ENCODE measurements at regions of chr21 and their contacts with region 1.

Region 1: GRCh38 chr21:35051287-35051818 is 2.3 kb upstream of the RUNX1 start:
- DNase-seq: peak; percentile 83 to 86 (median 84)
- H3K4me3 ChIP-seq: peak overlapping the region in 1 of 2 donors; percentile 4
- H3K4me3 Mint-ChIP-seq: peak overlapping the region; percentile 51 to 100 (median 94)
- H3K27ac ChIP-seq: peak overlapping the region; percentile 82
- H3K27ac Mint-ChIP-seq: peak overlapping the region; percentile 92 to 100 (median 99)
- H3K4me1 ChIP-seq: peaks cover 33% of the 10 kb centered on the region
- H3K4me1 Mint-ChIP-seq: peaks cover 26 to 55% (median 35%) of the 10 kb centered on the region in 4 donors
- H3K27me3 ChIP-seq: no peaks in the 10 kb centered on the region
- H3K27me3 Mint-ChIP-seq: peaks cover 1 to 3% of the 10 kb centered on the region in 2 donors

Region 2: GRCh38 chr21:34133802-34134201 is 917.6 kb before region 1 on chr21:
- CTCF ChIA-PET with region 1: no interaction called
- POLR2A ChIA-PET with region 1: no interaction called
- intact Hi-C with region 1: no loop called
- DNase-seq: no peak
- H3K4me3 ChIP-seq: no peak overlapping the region
- H3K4me3 Mint-ChIP-seq: no peak overlapping the region
- H3K27ac ChIP-seq: no peak overlapping the region
- H3K27ac Mint-ChIP-seq: peak overlapping the region in 2 of 7 donors; percentile 27 to 39
- H3K4me1 ChIP-seq: peaks cover 48% of the 10 kb centered on the region
- H3K4me1 Mint-ChIP-seq: peaks cover 46 to 64% (median 57%) of the 10 kb centered on the region in 4 donors
- H3K27me3 ChIP-seq: no peaks in the 10 kb centered on the region
- H3K27me3 Mint-ChIP-seq: no peaks in the 10 kb centered on the region

Region 3: GRCh38 chr21:34807146-34807880 is 244.0 kb before region 1 on chr21:
- CTCF ChIA-PET with region 1: no interaction called
- POLR2A ChIA-PET with region 1: interaction called, 6 read pairs
- intact Hi-C with region 1: loop called (anchors 5 kb)
- DNase-seq: peak; percentile 20 to 90 (median 24)
- H3K4me3 ChIP-seq: no peak overlapping the region
- H3K4me3 Mint-ChIP-seq: peak overlapping the region in 4 of 8 donors; percentile 26 to 79 (median 69)
- H3K27ac ChIP-seq: peak overlapping the region; percentile 59
- H3K27ac Mint-ChIP-seq: peak overlapping the region; percentile 75 to 99 (median 91)
- H3K4me1 ChIP-seq: peaks cover 56% of the 10 kb centered on the region
- H3K4me1 Mint-ChIP-seq: peaks cover 61 to 89% (median 73%) of the 10 kb centered on the region in 4 donors
- H3K27me3 ChIP-seq: no peaks in the 10 kb centered on the region
- H3K27me3 Mint-ChIP-seq: no peaks in the 10 kb centered on the region

Region 4: DNA sequence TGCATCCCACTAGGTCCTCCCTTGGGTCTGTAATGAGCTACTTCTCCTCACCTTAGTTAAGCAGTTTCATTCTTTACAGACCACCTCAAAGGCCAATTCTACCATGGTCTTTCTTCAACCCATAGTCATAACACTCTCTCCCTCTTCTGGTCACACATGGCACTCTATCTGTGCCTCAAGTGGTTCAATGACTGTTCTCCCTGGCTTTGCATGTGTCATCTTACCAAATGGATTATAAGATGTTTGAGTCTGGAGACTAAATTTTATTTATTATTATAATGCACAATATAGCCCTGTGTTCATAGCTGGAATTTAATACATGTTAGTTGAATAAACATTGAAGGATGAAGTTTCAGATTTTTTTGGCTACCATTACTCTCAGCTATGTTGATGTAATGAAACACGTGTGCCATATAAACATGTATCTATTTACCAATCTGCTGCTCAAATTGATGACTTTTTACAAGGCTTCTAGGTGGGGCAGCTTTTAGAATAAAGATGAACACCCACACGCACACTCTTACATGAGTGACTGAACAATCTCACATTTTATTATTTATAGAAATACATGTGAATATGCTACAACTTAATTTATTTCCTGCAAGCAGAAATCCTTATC is 104.3 kb before region 1 on chr21:
- CTCF ChIA-PET with region 1: interaction called, 5 read pairs
- POLR2A ChIA-PET with region 1: interaction called, 14 read pairs
- intact Hi-C with region 1: no loop called
- DNase-seq: no peak
- H3K4me3 ChIP-seq: no peak overlapping the region
- H3K4me3 Mint-ChIP-seq: peak overlapping the region in 2 of 8 donors; percentile 17 to 56
- H3K27ac ChIP-seq: no peak overlapping the region
- H3K27ac Mint-ChIP-seq: peak overlapping the region in 6 of 7 donors; percentile 19 to 67 (median 58)
- H3K4me1 ChIP-seq: peaks cover 82% of the 10 kb centered on the region
- H3K4me1 Mint-ChIP-seq: peaks cover 66 to 97% (median 82%) of the 10 kb centered on the region in 4 donors
- H3K27me3 ChIP-seq: no peaks in the 10 kb centered on the region
- H3K27me3 Mint-ChIP-seq: no peaks in the 10 kb centered on the region

Region 5: GRCh38 chr21:35002879-35003722 is 48.3 kb before region 1 on chr21:
- CTCF ChIA-PET with region 1: interaction called, 3 read pairs
- POLR2A ChIA-PET with region 1: interaction called, 13 read pairs
- intact Hi-C with region 1: no loop called
- DNase-seq: no peak
- H3K4me3 ChIP-seq: no peak overlapping the region
- H3K4me3 Mint-ChIP-seq: peak overlapping the region in 2 of 8 donors; percentile 3 to 24
- H3K27ac ChIP-seq: no peak overlapping the region
- H3K27ac Mint-ChIP-seq: peak overlapping the region in 6 of 7 donors; percentile 3 to 72 (median 12)
- H3K4me1 ChIP-seq: peaks cover 81% of the 10 kb centered on the region
- H3K4me1 Mint-ChIP-seq: peaks cover 76 to 97% (median 87%) of the 10 kb centered on the region in 4 donors
- H3K27me3 ChIP-seq: no peaks in the 10 kb centered on the region
- H3K27me3 Mint-ChIP-seq: no peaks in the 10 kb centered on the region

Region 6: DNA sequence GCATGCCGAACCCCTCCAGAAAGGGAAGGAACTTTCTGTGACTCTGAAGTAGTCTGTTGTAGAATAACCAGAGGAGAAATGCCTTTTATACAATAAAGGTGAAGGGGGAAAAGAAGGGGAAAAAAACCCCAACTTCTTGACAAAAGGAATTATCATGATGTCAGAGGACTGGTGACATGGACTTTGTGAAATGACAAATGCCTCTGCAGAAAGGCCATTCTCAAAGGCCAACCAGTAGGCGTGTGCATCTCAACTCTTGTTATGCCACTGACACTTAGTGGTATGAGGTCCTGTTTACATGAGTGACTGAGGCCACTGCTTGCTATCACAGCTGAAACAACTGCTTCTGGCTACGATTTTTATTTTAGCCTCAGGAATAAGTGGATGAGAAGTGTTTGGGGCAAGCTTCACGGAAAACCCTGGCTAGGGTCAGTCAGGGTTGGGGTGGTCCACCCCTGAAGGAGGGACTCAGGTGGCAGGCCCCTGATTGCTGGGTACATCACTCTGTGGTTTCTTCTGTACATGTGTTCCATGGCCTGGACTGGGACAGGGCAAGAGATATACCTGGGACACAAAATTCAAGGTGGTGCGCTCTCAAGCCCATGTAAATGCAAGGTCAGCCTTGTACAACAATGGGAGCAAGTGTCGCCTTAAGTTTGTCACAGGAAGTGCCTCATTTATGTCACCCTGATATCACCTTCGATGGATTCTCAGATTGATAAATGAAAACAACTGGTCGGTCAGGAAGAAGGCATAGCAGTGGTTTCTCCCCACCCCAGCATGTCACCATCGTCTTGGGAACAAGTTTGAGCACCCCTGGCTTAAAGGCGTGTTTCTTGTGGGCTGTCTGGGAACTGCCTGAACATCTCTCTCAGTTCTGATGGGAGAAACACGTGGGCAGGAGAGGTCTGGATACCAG is 14.6 kb before region 1 on chr21:
- CTCF ChIA-PET with region 1: interaction called, 24 read pairs
- POLR2A ChIA-PET with region 1: interaction called, 729 read pairs
- intact Hi-C with region 1: no loop called
- DNase-seq: no peak
- H3K4me3 ChIP-seq: peak overlapping the region; percentile 8 to 18
- H3K4me3 Mint-ChIP-seq: peak overlapping the region in 7 of 8 donors; percentile 71 to 91 (median 81)
- H3K27ac ChIP-seq: peak overlapping the region; percentile 63
- H3K27ac Mint-ChIP-seq: peak overlapping the region; percentile 91 to 97 (median 95)
- H3K4me1 ChIP-seq: peaks cover 99% of the 10 kb centered on the region
- H3K4me1 Mint-ChIP-seq: peaks cover 85 to 100% (median 92%) of the 10 kb centered on the region in 4 donors
- H3K27me3 ChIP-seq: no peaks in the 10 kb centered on the region
- H3K27me3 Mint-ChIP-seq: no peaks in the 10 kb centered on the region

Region 7: DNA sequence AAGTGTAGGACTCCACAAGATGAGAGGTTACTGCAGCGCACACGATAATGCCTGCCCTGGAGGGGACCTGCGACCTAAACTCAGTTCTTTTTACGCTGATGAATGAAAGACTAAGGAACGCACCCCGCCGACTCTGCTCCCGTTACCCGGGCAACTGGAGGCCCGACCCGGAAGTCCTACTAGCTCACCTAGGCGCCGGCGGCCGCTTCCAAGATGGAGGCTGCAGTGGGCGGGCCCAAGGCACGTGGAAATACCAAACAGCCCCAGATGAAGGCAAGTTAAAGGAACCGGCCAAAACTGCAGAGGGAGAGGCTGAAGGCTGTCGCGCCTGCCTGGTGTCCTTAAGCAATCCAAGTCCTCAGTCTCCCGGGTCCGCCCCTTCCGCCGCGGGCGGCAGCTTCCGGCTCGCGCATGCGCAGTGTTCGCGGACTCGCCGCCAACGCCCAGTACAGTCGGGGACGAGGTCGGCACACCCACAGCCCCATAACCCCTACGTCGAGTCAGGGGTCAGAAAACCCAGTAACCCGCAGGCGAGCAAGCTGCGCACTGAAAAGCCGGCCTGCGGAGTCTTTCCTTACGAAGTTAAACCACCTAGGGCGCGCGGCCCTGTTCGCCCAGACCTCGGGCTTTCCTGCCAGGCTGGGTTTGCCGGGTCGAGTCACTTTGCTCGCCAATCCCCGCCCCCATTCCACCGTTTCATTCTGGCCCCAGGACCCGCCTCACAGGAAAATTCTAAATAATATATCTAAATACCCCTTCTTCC is 1009.0 kb after region 1 on chr21 and contains the start of gene SETD4:
- CTCF ChIA-PET with region 1: no interaction called
- POLR2A ChIA-PET with region 1: no interaction called
- intact Hi-C with region 1: loop called (anchors 1 kb)
- DNase-seq: peak; percentile 91 to 95 (median 93)
- H3K4me3 ChIP-seq: peak within 1 kb of the TSS; percentile 94 to 98
- H3K4me3 Mint-ChIP-seq: peak within 1 kb of the TSS; percentile 93 to 99 (median 96)
- H3K27ac ChIP-seq: peak within 1 kb of the TSS; percentile 83
- H3K27ac Mint-ChIP-seq: peak within 1 kb of the TSS; percentile 98 to 99 (median 98)
- H3K4me1 ChIP-seq: peaks cover 13% of the 10 kb centered on the region
- H3K4me1 Mint-ChIP-seq: peaks cover 6 to 34% (median 14%) of the 10 kb centered on the region in 4 donors
- H3K27me3 ChIP-seq: no peaks in the 10 kb centered on the region
- H3K27me3 Mint-ChIP-seq: no peaks in the 10 kb centered on the region
- total RNA-seq, gene SETD4: 30.3 to 31.0 TPM

Measured in CD4-positive, alpha-beta memory T cell (primary cell).